Pancreas (tissue), 10 donors: ENCODE measurements at regions of chr12 and their contacts with region 1.

Region 1: DNA sequence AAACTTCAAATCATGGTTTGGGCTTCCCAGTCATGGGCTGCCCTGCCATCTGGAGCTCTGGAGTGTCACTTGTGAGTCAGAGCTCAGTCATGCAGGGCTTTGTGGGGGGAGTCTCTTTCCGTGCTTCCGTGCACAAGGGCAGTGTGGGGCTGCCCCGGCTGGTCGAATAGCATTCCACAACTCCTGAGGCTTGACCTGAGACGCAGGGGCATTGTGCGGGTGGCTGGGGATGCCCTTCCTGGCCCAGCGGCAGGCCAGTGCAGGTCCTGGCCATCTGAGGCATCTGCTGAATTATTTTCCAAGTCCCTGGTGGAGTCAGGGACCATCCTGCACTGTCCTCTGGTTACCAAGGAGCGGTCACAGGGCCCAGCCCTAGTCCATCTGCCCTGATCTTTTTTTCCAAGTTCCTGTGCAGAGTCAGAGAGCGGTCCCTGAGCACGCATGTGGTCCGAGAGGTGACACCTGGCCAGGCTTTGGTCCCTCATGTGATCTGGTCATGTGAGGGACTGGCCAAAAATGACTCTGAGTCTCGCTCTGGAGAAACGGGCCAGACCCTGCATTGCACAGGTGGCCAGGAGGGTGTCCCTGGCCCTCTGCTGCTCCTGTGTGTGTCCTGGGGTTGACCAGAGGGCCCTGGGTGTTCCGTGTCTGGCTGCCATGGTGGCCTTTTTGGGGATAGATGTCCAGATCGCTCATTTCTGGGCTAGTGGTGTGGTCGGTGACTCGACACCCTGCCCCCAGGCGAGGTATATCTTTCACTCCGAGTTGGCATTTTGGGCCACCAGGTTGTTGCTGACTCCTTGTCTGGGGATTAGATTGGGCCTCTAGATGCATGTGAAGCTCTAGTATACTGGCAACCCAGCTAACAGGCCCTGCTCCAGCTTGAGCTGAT is 166.9 kb upstream of the ALG10B start:
- DNase-seq: peak in 1 of 6 donors; percentile 4
- ATAC-seq: no peak
- H3K4me3 ChIP-seq: no peak overlapping the region
- H3K27ac ChIP-seq: no peak overlapping the region
- H3K4me1 ChIP-seq: no peaks in the 10 kb centered on the region
- H3K27me3 ChIP-seq: no peaks in the 10 kb centered on the region
- CTCF ChIP-seq: no peak

Region 2: GRCh38 chr12:38053655-38054464 is 95.8 kb before region 1 on chr12:
- intact Hi-C with region 1: loop called in 1 of 3 experiments (anchors 10 kb)
- DNase-seq: peak; percentile 38 to 85 (median 74)
- ATAC-seq: peak; percentile 70 to 85 (median 78)
- H3K4me3 ChIP-seq: no peak overlapping the region
- H3K27ac ChIP-seq: no peak overlapping the region
- H3K4me1 ChIP-seq: no peaks in the 10 kb centered on the region
- H3K27me3 ChIP-seq: no peaks in the 10 kb centered on the region
- CTCF ChIP-seq: peak; percentile 23 to 43 (median 34)

Region 3: GRCh38 chr12:38291160-38291559 is 141.5 kb after region 1 on chr12:
- intact Hi-C with region 1: loop called in 1 of 3 experiments (anchors 10 kb)
- DNase-seq: no peak
- ATAC-seq: no peak
- H3K4me3 ChIP-seq: no peak overlapping the region
- H3K27ac ChIP-seq: no peak overlapping the region
- H3K4me1 ChIP-seq: no peaks in the 10 kb centered on the region
- H3K27me3 ChIP-seq: no peaks in the 10 kb centered on the region
- CTCF ChIP-seq: no peak

Region 4: DNA sequence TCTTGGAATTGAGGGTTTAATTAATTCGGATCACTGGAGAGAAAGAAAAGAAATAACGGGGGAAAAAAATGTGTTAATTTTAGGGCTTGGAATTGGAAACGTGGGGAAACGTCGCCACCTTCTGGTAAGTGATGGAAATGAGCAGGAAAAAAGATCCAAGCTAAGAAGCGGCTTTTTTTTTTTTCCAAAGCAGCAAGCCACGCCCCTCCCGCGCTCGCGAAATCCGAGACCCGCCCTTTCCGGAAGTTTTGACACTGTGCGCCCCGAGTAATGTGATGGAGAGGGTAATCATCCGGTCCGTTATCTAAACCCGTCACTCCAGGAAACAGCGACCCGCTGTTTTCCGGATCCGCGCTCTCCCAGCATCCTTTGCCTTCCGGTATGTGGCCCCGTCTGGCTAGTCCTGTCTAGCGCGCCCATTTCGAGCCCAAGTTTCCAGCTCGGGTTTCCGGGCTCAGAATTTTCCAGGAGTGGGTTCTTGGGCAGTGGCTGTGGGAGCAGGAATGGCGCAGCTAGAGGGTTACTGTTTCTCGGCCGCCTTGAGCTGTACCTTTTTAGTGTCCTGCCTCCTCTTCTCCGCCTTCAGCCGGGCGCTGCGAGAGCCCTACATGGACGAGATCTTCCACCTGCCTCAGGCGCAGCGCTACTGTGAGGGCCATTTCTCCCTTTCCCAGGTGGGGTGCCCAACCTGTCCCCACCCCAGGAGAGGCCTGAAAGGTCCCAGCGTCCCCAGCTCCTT is 166.9 kb after region 1 on chr12 and contains the start of gene ALG10B:
- intact Hi-C with region 1: no loop called
- DNase-seq: peak; percentile 87 to 94 (median 91)
- ATAC-seq: peak; percentile 99 to 100 (median 100)
- H3K4me3 ChIP-seq: peak within 1 kb of the TSS; percentile 41 to 80 (median 64)
- H3K27ac ChIP-seq: peak within 1 kb of the TSS; percentile 64 to 86 (median 84)
- H3K4me1 ChIP-seq: peaks cover 0 to 7% (median 0%) of the 10 kb centered on the region in 3 donors
- H3K27me3 ChIP-seq: no peaks in the 10 kb centered on the region
- CTCF ChIP-seq: peak; percentile 52 to 64 (median 59)
- total RNA-seq, gene ALG10B: 3.1 to 5.1 (median 4.0) TPM